Caco-2 (cell line): ENCODE measurements at regions of chr2 and their contacts with region 1.

Region 1: GRCh38 chr2:63736354-63736753 is 105.3 kb upstream of the UGP2 start:
- DNase-seq: no peak
- H3K4me3 ChIP-seq: no peak overlapping the region
- H3K4me3 Mint-ChIP-seq: no peak overlapping the region
- H3K27ac Mint-ChIP-seq: no peak overlapping the region
- H3K4me1 ChIP-seq: peaks cover 64% of the 10 kb centered on the region
- H3K4me1 Mint-ChIP-seq: peaks cover 46% of the 10 kb centered on the region
- H3K27me3 ChIP-seq: no peaks in the 10 kb centered on the region
- H3K27me3 Mint-ChIP-seq: no peaks in the 10 kb centered on the region
- CTCF ChIP-seq: no peak

Region 2: GRCh38 chr2:63522950-63523349 is 213.4 kb before region 1 on chr2:
- CTCF ChIA-PET with region 1: no interaction called
- POLR2A ChIA-PET with region 1: no interaction called
- intact Hi-C with region 1: no loop called
- DNase-seq: no peak
- H3K4me3 ChIP-seq: no peak overlapping the region
- H3K4me3 Mint-ChIP-seq: no peak overlapping the region
- H3K27ac Mint-ChIP-seq: no peak overlapping the region
- H3K4me1 ChIP-seq: no peaks in the 10 kb centered on the region
- H3K4me1 Mint-ChIP-seq: no peaks in the 10 kb centered on the region
- H3K27me3 ChIP-seq: no peaks in the 10 kb centered on the region
- H3K27me3 Mint-ChIP-seq: peaks cover 4% of the 10 kb centered on the region
- CTCF ChIP-seq: no peak

Region 3: DNA sequence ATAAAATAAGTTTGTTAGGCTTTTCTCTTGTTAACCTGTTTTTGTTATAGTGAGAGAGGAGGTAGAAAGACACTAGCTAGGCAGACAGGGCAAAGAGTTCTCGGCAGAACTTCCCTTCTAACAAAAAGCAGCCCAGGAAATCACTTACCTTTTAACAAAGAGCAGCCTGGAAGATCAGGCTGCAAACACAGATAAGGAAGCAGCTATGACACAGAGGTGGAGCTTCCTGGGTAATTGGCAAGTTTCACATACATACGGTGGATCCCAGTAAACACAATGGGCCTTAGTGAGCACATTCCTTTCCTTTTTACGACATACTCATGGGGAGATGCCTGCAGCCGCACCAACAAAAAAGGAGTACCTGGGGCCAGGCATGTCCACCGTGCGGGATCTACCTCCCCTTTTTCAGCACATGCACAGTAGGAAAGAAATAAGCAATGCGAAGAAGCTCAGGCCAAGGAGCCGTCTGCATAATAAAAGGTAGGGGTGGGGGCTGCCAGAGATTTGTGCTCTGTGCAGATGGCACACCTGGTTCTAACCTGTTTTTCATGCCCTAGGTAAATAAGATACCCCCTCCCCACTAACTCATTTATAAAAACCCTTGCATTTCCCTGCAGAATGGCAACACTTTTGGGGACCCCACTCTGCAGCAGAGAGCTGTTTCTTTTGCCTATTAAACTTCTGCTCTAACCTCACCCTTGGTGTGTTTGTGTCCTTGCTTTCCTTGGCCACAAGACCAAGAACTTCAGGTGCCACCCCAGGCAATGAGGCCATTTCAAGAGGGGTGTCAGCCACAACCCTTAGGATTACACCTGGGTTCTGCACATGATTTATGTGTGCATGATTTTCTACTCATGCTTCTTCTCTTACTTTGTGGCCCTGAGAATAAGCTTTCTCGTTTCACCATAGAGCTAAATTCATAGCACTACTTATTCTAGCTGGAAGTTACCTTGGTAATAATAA is 121.1 kb before region 1 on chr2:
- CTCF ChIA-PET with region 1: no interaction called
- POLR2A ChIA-PET with region 1: no interaction called
- intact Hi-C with region 1: loop called (anchors 5 kb)
- DNase-seq: peak; percentile 78 to 87
- H3K4me3 ChIP-seq: peak overlapping the region; percentile 35
- H3K4me3 Mint-ChIP-seq: peak overlapping the region; percentile 67
- H3K27ac Mint-ChIP-seq: peak overlapping the region; percentile 95
- H3K4me1 ChIP-seq: peaks cover 43% of the 10 kb centered on the region
- H3K4me1 Mint-ChIP-seq: peaks cover 44% of the 10 kb centered on the region
- H3K27me3 ChIP-seq: no peaks in the 10 kb centered on the region
- H3K27me3 Mint-ChIP-seq: no peaks in the 10 kb centered on the region
- CTCF ChIP-seq: no peak

Region 4: DNA sequence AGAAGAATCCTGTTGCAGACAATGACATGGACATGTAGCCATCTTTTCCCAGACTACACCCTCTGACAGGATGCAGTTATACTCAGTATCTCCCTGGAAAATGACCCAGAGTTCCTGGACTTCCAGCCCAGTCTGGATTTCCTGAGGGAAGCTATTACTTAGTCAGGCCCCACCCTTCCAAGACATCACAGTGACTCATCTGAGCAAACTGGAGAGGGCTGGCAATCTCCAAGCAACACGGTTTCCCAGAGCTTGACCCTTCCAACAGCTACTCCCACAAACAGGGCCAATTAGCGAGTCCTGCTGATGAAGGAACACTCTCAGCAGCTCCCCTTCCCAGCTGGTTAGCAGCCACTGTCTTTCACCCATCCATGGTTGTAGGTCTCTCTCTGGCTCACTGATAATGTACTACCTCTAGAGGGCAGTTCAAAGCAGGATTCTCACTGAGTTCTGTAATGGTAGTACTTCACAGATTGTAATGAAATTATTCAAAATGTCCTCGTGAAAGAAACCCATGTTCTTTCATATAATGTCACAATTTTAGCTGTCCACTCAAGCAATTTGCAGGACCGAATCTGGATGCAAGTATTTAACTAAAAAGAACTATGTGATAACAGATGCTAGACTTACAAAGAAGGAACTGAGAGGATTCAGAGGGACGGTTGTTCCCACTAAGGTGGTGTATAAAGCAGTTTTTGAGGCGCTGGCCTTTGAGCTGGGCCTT is 37.4 kb before region 1 on chr2:
- CTCF ChIA-PET with region 1: interaction called, 7 read pairs
- POLR2A ChIA-PET with region 1: interaction called, 4 read pairs
- intact Hi-C with region 1: loop called (anchors 2 kb)
- DNase-seq: peak; percentile 62 to 69
- H3K4me3 ChIP-seq: no peak overlapping the region
- H3K4me3 Mint-ChIP-seq: no peak overlapping the region
- H3K27ac Mint-ChIP-seq: peak overlapping the region; percentile 34
- H3K4me1 ChIP-seq: peaks cover 8% of the 10 kb centered on the region
- H3K4me1 Mint-ChIP-seq: peaks cover 9% of the 10 kb centered on the region
- H3K27me3 ChIP-seq: no peaks in the 10 kb centered on the region
- H3K27me3 Mint-ChIP-seq: no peaks in the 10 kb centered on the region
- CTCF ChIP-seq: peak; percentile 57 to 65

Region 5: DNA sequence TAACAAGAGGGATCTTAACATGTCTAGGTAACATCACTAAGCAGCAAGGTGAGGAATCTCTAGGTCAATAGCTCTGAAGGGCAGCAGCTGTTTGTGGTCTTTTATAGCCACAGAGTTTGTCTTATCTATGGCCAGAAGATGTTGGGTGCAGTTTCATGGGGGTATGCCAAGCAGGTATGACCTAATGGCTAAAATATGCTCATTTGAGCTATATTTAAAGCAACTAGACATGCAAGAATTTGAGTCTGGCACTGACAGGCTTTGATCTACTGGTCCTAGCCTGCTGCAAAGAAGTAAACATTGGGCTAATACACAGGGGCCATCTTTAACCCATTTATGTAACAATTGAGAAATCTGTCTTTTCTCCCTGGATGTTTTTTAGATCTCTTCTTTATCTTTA is 91.4 kb after region 1 on chr2:
- CTCF ChIA-PET with region 1: interaction called, 3 read pairs
- POLR2A ChIA-PET with region 1: interaction called, 3 read pairs
- intact Hi-C with region 1: loop called (anchors 2 kb)
- DNase-seq: peak; percentile 86 to 90
- H3K4me3 ChIP-seq: no peak overlapping the region
- H3K4me3 Mint-ChIP-seq: peak overlapping the region; percentile 77
- H3K27ac Mint-ChIP-seq: peak overlapping the region; percentile 93
- H3K4me1 ChIP-seq: peaks cover 43% of the 10 kb centered on the region
- H3K4me1 Mint-ChIP-seq: peaks cover 54% of the 10 kb centered on the region
- H3K27me3 ChIP-seq: no peaks in the 10 kb centered on the region
- H3K27me3 Mint-ChIP-seq: no peaks in the 10 kb centered on the region
- CTCF ChIP-seq: no peak